H1 (cell line): ENCODE measurements at regions of chr3 and their contacts with region 1.

Region 1: GRCh38 chr3:114383875-114384557 is 90.2 kb downstream of the TIGIT start:
- DNase-seq: peak; percentile 43 to 82
- H3K4me3 ChIP-seq: no peak overlapping the region
- H3K27ac ChIP-seq: no peak overlapping the region
- H3K4me1 ChIP-seq: peaks cover 0 to 2% (median 0%) of the 10 kb centered on the region in 4 experiments; a peak in 1 of 7 replicates
- H3K27me3 ChIP-seq: no peaks in the 10 kb centered on the region
- CTCF ChIP-seq: peak; percentile 79 to 93 (median 84)
- EP300 ChIP-seq: no peak
- POLR2A ChIP-seq: no peak
- RAD21 ChIP-seq: peak; percentile 91 to 93

Region 2: DNA sequence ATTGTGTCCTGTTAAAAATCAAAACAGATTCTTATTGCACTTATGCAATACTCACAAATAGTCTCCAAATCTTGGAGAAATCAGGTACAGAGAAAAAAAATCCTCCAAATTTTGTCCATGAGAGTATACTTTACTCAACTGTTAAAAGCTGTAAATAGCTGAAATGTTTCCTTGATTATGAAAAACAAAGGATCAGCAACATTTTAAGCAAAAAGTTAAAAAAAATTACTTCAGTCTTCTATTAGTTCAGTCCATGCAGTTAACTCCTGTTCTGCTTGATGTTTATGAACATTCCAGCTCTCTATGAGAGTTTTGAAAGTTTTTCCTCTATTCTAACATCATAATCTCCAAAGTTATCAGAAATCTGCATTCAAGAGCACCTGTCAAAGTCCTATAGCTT is 123.9 kb before region 1 on chr3:
- CTCF ChIA-PET with region 1: no interaction called
- POLR2A ChIA-PET with region 1: no interaction called
- DNase-seq: no peak
- H3K4me3 ChIP-seq: no peak overlapping the region
- H3K27ac ChIP-seq: no peak overlapping the region
- H3K4me1 ChIP-seq: no peaks in the 10 kb centered on the region
- H3K27me3 ChIP-seq: no peaks in the 10 kb centered on the region
- CTCF ChIP-seq: no peak
- EP300 ChIP-seq: no peak
- POLR2A ChIP-seq: no peak
- RAD21 ChIP-seq: no peak

Region 3: DNA sequence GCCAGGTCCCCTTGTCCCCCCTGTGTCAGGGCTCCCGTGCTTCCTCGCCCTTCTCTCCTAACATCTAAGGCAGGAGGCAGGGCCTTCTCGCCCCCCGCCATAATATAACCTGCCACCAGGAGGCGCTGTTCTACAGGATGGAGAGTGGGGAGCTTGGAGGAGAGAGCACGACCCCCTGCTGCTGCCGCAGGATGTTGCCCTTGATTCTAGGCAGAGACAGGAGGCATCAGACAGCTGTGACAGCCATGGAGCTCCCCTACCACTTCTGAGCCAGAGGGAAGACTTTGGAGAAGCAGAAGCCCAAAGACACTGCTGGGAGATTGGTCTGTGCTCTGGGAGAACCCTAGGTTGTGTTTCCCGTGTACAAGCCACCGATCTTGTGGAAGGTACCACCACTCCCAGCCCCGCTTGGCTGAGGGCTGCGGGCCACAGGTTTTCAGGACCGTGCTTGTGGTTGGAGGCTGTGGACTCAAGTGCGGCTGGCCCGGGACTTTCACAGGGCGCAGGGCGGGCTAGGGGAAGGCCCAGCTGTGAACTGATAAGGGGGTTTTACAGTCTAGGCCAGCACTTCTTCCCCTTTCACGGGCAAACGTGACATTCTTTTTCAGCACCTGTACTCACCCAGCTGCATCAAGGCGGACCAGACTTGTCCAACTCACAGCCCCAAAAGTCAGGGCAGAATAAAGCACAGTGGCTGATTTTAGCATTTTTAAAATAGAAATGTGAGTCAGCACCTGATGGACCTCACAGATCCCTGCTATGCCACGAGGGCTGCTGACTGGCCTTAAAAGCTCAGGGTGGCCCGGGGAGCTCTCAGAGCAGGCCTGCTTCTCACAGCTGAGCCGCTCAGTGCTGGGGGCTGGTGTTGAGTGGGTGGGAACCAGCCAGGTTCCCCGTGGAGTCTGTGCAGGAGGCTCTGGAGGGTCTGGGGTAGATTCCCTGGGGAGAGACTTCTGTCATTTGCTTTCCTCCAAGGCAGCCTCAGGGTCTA is 92.8 kb before region 1 on chr3:
- CTCF ChIA-PET with region 1: interaction called, 10 read pairs
- POLR2A ChIA-PET with region 1: no interaction called
- DNase-seq: peak; percentile 88 to 100
- H3K4me3 ChIP-seq: no peak overlapping the region
- H3K27ac ChIP-seq: no peak overlapping the region
- H3K4me1 ChIP-seq: peaks cover 0 to 4% (median 2%) of the 10 kb centered on the region in 4 experiments; a peak in 2 of 7 replicates
- H3K27me3 ChIP-seq: no peaks in the 10 kb centered on the region
- CTCF ChIP-seq: peak; percentile 92 to 97 (median 96)
- EP300 ChIP-seq: no peak
- POLR2A ChIP-seq: no peak
- RAD21 ChIP-seq: peak; percentile 92 to 96

Region 4: GRCh38 chr3:114362815-114363214 is 21.2 kb before region 1 on chr3:
- CTCF ChIA-PET with region 1: interaction called, 30 read pairs
- POLR2A ChIA-PET with region 1: no interaction called
- DNase-seq: no peak
- H3K4me3 ChIP-seq: no peak overlapping the region
- H3K27ac ChIP-seq: no peak overlapping the region
- H3K4me1 ChIP-seq: peaks cover 0 to 5% (median 0%) of the 10 kb centered on the region in 4 experiments; a peak in 1 of 7 replicates
- H3K27me3 ChIP-seq: no peaks in the 10 kb centered on the region
- CTCF ChIP-seq: peak in 1 of 3 experiments; percentile 30; a peak in 2 of 4 replicates
- EP300 ChIP-seq: no peak
- POLR2A ChIP-seq: no peak
- RAD21 ChIP-seq: peak in 1 of 2 experiments; percentile 32; a peak in 2 of 4 replicates

Region 5: GRCh38 chr3:114370537-114371174 is 13.4 kb before region 1 on chr3:
- CTCF ChIA-PET with region 1: interaction called, 34 read pairs
- POLR2A ChIA-PET with region 1: no interaction called
- DNase-seq: peak in 1 of 2 experiments; percentile 53
- H3K4me3 ChIP-seq: no peak overlapping the region
- H3K27ac ChIP-seq: no peak overlapping the region
- H3K4me1 ChIP-seq: no peaks in the 10 kb centered on the region
- H3K27me3 ChIP-seq: no peaks in the 10 kb centered on the region
- CTCF ChIP-seq: peak; percentile 51 to 79 (median 58)
- EP300 ChIP-seq: no peak
- POLR2A ChIP-seq: no peak
- RAD21 ChIP-seq: peak; percentile 24 to 51; a peak in 3 of 4 replicates

Region 6: DNA sequence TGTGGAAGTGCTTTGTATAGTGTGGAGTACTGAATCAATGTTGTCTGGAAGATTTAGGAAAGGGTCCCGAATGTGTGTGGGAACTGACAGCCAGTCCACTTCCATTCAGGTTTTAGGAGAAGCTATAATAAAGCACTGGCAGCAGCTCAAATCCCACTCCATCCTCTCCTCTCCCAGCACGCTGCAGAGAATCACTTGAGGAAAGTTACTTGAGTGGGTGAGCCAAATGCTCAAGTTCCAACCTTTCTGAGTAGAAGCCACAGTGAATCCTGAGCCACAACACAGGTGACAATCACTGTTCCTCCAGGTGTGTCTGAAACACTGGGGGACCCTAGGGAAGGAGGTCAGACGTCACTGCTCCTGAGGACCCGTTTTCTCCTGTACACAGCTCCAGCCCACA is 16.4 kb after region 1 on chr3:
- CTCF ChIA-PET with region 1: interaction called, 44 read pairs
- POLR2A ChIA-PET with region 1: no interaction called
- DNase-seq: no peak
- H3K4me3 ChIP-seq: no peak overlapping the region
- H3K27ac ChIP-seq: no peak overlapping the region
- H3K4me1 ChIP-seq: no peaks in the 10 kb centered on the region; a peak in 1 of 7 replicates
- H3K27me3 ChIP-seq: no peaks in the 10 kb centered on the region
- CTCF ChIP-seq: no peak
- EP300 ChIP-seq: no peak
- POLR2A ChIP-seq: no peak
- RAD21 ChIP-seq: no peak

Region 7: GRCh38 chr3:114411811-114412803 is 28.1 kb after region 1 on chr3:
- CTCF ChIA-PET with region 1: interaction called, 39 read pairs
- POLR2A ChIA-PET with region 1: no interaction called
- DNase-seq: no peak
- H3K4me3 ChIP-seq: no peak overlapping the region; a peak in 1 of 8 replicates
- H3K27ac ChIP-seq: no peak overlapping the region
- H3K4me1 ChIP-seq: peaks cover 1 to 25% (median 15%) of the 10 kb centered on the region in 4 experiments; a peak in 5 of 7 replicates
- H3K27me3 ChIP-seq: no peaks in the 10 kb centered on the region
- CTCF ChIP-seq: no peak
- EP300 ChIP-seq: no peak
- POLR2A ChIP-seq: no peak
- RAD21 ChIP-seq: no peak; a peak in 1 of 4 replicates

Region 8: DNA sequence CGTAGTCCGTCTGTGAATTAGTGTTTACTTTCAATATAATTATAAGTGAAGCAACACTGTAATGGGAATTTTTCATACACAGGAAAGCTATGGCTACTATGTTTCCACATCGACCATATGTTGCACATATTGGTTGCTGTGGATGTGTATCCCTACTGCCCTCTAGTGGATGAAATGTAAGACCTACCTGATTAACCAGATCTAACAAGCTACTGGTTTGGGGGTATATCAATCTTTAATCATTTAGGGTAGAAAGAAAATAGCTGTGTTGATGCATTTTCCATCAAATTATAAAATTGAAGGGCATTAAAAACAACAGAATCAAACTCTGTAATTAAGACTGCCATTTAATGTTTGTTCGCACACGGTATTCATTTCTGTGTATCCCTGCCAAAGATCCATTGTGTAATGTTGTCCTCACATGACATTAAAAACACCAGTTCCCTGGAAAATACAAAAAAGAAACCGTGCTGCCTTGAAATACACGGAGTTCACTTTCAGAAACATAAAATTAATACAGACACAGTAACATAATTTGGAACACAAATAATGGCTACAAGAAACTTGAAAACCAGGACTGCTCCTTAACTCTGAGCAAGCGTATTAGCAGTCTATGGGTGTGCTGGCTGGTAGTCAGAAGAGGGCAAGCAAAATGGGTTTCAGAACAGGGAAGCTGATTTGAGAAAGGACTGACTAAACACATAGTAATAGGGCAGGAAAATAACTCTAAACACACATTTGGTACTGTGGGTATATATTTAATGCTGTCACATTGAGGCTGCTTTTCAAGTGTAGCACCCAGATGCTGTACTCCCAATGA is 34.9 kb after region 1 on chr3:
- CTCF ChIA-PET with region 1: interaction called, 67 read pairs
- POLR2A ChIA-PET with region 1: no interaction called
- DNase-seq: no peak
- H3K4me3 ChIP-seq: no peak overlapping the region
- H3K27ac ChIP-seq: no peak overlapping the region
- H3K4me1 ChIP-seq: peaks cover 0 to 4% (median 0%) of the 10 kb centered on the region in 4 experiments; a peak in 1 of 7 replicates
- H3K27me3 ChIP-seq: no peaks in the 10 kb centered on the region
- CTCF ChIP-seq: peak in 2 of 3 experiments; percentile 53 to 68; a peak in 2 of 4 replicates
- EP300 ChIP-seq: no peak
- POLR2A ChIP-seq: no peak
- RAD21 ChIP-seq: peak; percentile 70 to 79

Region 9: DNA sequence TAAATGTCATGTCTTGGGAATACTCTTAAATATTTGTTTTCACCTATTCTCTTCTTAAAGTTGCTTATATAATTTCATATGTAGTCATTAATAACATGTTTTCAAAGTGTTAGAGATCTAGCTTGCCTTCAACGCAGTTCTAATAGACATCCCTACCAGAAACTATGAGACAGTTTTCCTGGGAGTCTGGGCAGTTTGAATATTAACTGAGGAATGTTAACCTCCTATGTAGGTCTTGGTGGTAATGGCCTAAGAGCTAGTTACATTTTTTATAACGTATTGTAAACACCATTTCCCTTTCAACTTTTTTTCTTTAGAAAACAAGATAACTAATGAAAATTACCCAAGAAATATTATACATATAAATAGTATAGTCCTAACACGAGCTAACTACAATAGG is 238.0 kb after region 1 on chr3:
- CTCF ChIA-PET with region 1: no interaction called
- POLR2A ChIA-PET with region 1: no interaction called
- DNase-seq: no peak
- H3K4me3 ChIP-seq: no peak overlapping the region
- H3K27ac ChIP-seq: no peak overlapping the region
- H3K4me1 ChIP-seq: peaks cover 0 to 2% (median 0%) of the 10 kb centered on the region in 4 experiments; a peak in 1 of 7 replicates
- H3K27me3 ChIP-seq: no peaks in the 10 kb centered on the region
- CTCF ChIP-seq: no peak
- EP300 ChIP-seq: no peak
- POLR2A ChIP-seq: no peak
- RAD21 ChIP-seq: no peak